ENCODE measurements at regions of chr14 and their contacts with region 1.

Region 1: GRCh38 chr14:72904840-72905561 is 11.1 kb upstream of the DPF3 start:
- DNase-seq: peak in 33 of 35 experiments; percentile 30 to 82 (median 52)
- ATAC-seq: peak; percentile 68 to 88 (median 74)
- H3K4me3 ChIP-seq: no peak overlapping the region
- H3K4me3 Mint-ChIP-seq: no peak overlapping the region
- H3K27ac ChIP-seq: no peak overlapping the region
- H3K27ac Mint-ChIP-seq: no peak overlapping the region
- H3K4me1 ChIP-seq: no peaks in the 10 kb centered on the region
- H3K4me1 Mint-ChIP-seq: peaks cover 0 to 6% (median 2%) of the 10 kb centered on the region in 3 donors
- H3K27me3 ChIP-seq: peaks cover 0 to 13% of the 10 kb centered on the region in 2 experiments
- H3K27me3 Mint-ChIP-seq: peaks cover 10 to 11% of the 10 kb centered on the region in 2 donors

Region 2: DNA sequence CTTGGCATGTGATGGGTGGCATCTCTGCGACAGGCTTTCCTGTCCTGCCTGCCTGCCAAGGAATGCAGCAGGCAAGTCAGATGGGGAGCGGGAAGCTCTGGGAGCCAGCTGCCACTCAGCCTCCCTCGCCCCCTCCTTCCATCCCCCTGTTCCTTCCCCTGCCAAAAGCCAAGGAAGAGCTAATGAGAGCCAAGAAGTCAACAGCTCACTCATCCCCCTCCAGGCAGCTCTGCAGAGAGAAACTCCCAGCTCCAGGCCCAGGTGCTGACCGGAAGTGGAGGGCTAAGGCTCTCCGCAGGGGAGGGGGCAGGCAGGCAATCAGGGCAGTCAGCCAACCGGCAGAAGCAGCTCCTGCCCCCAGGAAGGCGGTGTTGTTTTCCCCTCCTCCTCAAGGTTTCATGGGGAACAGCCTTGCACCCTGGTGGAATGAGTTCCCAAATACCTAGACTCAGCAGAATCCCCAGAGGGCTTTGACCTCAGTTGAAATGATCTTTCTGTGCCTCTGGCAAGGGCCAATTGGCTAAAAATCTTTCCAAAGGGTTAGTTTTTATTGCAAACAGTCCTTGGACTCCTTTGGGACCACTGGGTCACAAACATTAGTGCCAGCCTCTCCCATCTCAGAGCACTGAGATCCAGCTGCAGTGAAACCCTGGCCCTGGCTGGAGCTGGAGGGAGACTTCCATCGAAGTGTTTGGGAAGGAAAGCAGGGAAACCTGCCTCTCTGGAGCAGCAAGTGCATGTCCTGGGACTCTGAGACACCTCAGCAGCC is 360.2 kb before region 1 on chr14:
- CTCF ChIA-PET with region 1: no interaction called
- POLR2A ChIA-PET with region 1: no interaction called
- DNase-seq: no peak
- ATAC-seq: no peak
- H3K4me3 ChIP-seq: no peak overlapping the region
- H3K4me3 Mint-ChIP-seq: no peak overlapping the region
- H3K27ac ChIP-seq: no peak overlapping the region
- H3K27ac Mint-ChIP-seq: no peak overlapping the region
- H3K4me1 ChIP-seq: no peaks in the 10 kb centered on the region
- H3K4me1 Mint-ChIP-seq: peaks cover 6 to 17% (median 12%) of the 10 kb centered on the region in 3 donors
- H3K27me3 ChIP-seq: peaks cover 0 to 34% of the 10 kb centered on the region in 2 experiments
- H3K27me3 Mint-ChIP-seq: peaks cover 5 to 7% of the 10 kb centered on the region in 2 donors

Region 3: GRCh38 chr14:72731252-72732020 is 173.6 kb before region 1 on chr14:
- CTCF ChIA-PET with region 1: no interaction called
- POLR2A ChIA-PET with region 1: no interaction called
- DNase-seq: no peak
- ATAC-seq: no peak
- H3K4me3 ChIP-seq: no peak overlapping the region
- H3K4me3 Mint-ChIP-seq: no peak overlapping the region
- H3K27ac ChIP-seq: no peak overlapping the region
- H3K27ac Mint-ChIP-seq: no peak overlapping the region
- H3K4me1 ChIP-seq: no peaks in the 10 kb centered on the region
- H3K4me1 Mint-ChIP-seq: no peaks in the 10 kb centered on the region
- H3K27me3 ChIP-seq: no peaks in the 10 kb centered on the region
- H3K27me3 Mint-ChIP-seq: peaks cover 0 to 4% of the 10 kb centered on the region in 2 donors

Region 4: GRCh38 chr14:72771561-72771960 is 133.4 kb before region 1 on chr14:
- CTCF ChIA-PET with region 1: no interaction called
- POLR2A ChIA-PET with region 1: no interaction called
- DNase-seq: no peak
- ATAC-seq: no peak
- H3K4me3 ChIP-seq: no peak overlapping the region
- H3K4me3 Mint-ChIP-seq: no peak overlapping the region
- H3K27ac ChIP-seq: no peak overlapping the region
- H3K27ac Mint-ChIP-seq: no peak overlapping the region
- H3K4me1 ChIP-seq: peaks cover 0 to 5% of the 10 kb centered on the region in 2 experiments
- H3K4me1 Mint-ChIP-seq: peaks cover 0 to 3% (median 3%) of the 10 kb centered on the region in 3 donors
- H3K27me3 ChIP-seq: peaks cover 0 to 4% of the 10 kb centered on the region in 2 experiments
- H3K27me3 Mint-ChIP-seq: peaks cover 3 to 8% of the 10 kb centered on the region in 2 donors

Region 5: GRCh38 chr14:72893636-72894321 is 11.2 kb before region 1 on chr14 and contains the start of gene DPF3:
- CTCF ChIA-PET with region 1: interaction called in 1 of 2 experiments, 18 read pairs
- POLR2A ChIA-PET with region 1: no interaction called
- DNase-seq: peak; percentile 77 to 93 (median 87)
- ATAC-seq: peak; percentile 97 to 98 (median 97)
- H3K4me3 ChIP-seq: peak within 1 kb of the TSS; percentile 74 to 96
- H3K4me3 Mint-ChIP-seq: peak within 1 kb of the TSS; percentile 86 to 98 (median 90)
- H3K27ac ChIP-seq: no peak within 1 kb of the TSS
- H3K27ac Mint-ChIP-seq: peak within 1 kb of the TSS; percentile 23 to 89
- H3K4me1 ChIP-seq: peaks cover 7 to 30% of the 10 kb centered on the region in 2 experiments
- H3K4me1 Mint-ChIP-seq: peaks cover 23 to 29% (median 26%) of the 10 kb centered on the region in 3 donors
- H3K27me3 ChIP-seq: peaks cover 9 to 52% of the 10 kb centered on the region in 2 experiments
- H3K27me3 Mint-ChIP-seq: peaks cover 20 to 46% of the 10 kb centered on the region in 2 donors
- total RNA-seq, gene DPF3: 0.33 to 0.86 (median 0.54) TPM